ENCODE measurements at regions of chr10 and their contacts with region 1.

Region 1: DNA sequence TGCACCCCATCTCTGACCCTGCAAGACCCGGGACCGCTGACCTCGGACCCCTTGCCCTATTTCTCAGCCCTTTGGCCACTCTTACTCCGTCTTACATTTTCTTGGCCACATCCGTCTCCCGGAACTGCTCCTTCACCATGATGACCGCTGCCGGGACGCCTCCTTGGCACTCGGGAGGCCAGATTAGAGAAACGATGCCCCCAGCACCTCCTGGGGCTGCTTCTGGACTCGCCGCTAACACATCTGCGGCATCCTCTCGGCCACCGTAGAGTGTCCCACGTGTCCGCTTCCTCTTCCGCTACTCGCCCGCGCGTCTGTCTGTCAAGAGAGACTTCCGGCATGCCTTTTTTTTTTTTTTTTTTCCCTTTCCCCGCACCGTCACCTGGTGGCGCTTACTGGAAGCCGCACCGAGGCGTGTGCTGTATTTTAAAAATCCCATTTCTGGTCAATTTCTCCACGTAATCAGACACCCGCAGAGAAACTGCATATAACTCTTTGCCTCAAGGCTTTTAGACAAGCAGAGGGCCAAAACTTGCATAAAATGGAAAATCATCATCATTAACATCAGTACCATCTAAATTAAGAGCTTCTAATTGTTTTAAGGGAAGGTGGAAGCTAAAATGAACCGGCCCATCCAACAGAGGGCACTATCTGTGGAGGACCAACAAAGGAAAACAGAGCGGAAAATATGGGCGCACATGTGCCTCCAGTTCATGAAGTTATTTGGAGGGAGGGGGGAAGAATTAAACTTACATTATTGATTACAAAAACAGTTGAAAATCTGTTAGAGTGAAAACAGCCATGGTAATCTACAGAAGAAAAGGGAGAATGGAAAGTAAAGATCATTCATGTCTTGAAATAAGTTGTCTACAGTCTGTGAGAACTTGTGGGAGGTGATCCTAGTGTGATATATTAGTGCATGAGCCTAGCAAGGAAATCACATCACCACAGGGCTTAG is at the start of gene POLR3A:
- DNase-seq: peak; percentile 83 to 97 (median 90)
- ATAC-seq: peak; percentile 58
- H3K4me3 ChIP-seq: peak within 1 kb of the TSS; percentile 99
- H3K4me3 Mint-ChIP-seq: peak within 1 kb of the TSS; percentile 97
- H3K27ac ChIP-seq: peak within 1 kb of the TSS; percentile 38 to 61
- H3K27ac Mint-ChIP-seq: peak within 1 kb of the TSS; percentile 83
- H3K4me1 ChIP-seq: peaks cover 33% of the 10 kb centered on the region
- H3K4me1 Mint-ChIP-seq: peaks cover 48% of the 10 kb centered on the region
- H3K27me3 ChIP-seq: no peaks in the 10 kb centered on the region
- H3K27me3 Mint-ChIP-seq: no peaks in the 10 kb centered on the region
- CTCF ChIP-seq: peak; percentile 72
- total RNA-seq, gene POLR3A: 6.7 to 6.9 TPM

Region 2: DNA sequence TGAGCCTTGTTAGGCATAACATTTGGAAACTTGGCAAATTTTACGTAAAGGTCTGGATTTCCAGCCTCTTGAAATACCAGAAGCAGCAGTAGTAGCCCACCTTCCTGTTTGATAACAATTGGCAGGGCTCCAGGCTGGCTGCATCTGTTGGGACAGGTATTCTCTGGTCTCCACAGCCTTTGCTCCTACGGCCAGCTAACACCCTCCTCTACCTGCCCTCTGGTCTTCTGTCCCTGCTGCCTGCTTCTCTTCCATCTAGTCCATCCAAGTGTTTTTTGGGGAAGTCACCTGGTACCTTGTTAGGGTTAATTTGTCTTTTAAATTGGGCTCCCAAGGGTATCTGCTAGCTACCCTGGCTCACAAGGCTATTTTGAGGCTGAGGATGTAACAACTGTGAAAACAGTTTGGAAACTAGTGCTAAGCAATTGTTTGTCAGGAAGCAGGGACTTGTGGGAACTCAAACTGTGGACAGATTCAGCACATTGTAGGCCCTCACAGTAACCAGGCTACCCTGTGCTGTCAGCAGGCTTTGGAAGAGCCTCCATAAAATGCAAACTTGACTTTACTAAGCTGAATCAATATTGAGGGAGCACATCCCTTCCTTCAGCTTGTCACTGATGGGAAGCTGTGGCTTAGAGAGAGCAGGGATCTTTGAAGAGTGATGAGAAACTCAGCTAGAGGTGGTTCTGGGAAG is 12.7 kb after region 1 on chr10:
- CTCF ChIA-PET with region 1: interaction called, 4 read pairs
- POLR2A ChIA-PET with region 1: interaction called, 11 read pairs
- intact Hi-C with region 1: no loop called
- DNase-seq: no peak
- ATAC-seq: no peak
- H3K4me3 ChIP-seq: no peak overlapping the region
- H3K4me3 Mint-ChIP-seq: no peak overlapping the region
- H3K27ac ChIP-seq: no peak overlapping the region
- H3K27ac Mint-ChIP-seq: peak overlapping the region; percentile 76
- H3K4me1 ChIP-seq: peaks cover 34% of the 10 kb centered on the region
- H3K4me1 Mint-ChIP-seq: peaks cover 52% of the 10 kb centered on the region
- H3K27me3 ChIP-seq: no peaks in the 10 kb centered on the region
- H3K27me3 Mint-ChIP-seq: no peaks in the 10 kb centered on the region
- CTCF ChIP-seq: no peak

Region 3: DNA sequence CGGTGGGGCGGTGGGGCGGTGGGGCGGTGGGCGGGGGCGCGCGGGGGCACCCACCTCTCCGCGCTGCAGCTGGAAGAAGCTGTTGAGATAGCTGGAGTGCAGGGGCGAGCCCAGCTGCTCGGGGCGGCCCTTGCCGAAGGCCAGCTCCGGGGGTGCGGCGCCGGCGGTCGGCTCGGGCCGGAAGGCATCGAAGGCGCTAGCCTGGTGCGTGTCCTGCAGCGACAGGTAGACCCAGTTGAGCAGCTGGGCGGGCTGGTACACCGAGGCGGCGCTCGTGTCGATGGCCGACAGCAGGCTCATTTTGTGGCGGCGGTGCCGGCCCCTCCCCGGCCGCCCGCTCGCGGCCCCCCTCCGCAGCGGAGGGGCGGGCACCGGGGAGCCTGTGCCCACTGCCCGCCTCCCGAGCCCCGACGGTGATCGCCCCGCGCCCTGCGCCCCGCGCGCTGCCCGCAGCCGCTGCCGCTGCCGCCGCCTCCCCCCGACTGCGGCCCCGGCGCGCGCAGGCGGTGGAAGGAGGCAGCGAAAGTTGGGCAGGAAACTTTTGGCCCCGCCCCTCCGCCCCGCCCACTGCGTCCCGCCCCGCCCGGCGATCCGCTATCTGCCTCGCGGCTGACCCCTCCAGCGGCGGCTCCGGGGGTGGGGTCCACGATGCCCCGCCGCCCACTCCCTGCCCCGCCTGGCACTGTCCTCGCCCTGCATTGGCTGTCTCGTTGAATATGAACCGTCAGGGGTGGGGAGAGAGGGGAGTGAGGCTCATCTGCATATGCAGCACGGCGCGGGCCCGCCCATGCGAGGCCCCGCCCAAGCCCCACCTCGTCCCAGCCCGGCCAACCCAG is 1415.8 kb after region 1 on chr10 and contains the start of gene ZCCHC24:
- CTCF ChIA-PET with region 1: no interaction called
- POLR2A ChIA-PET with region 1: no interaction called
- intact Hi-C with region 1: loop called (anchors 5 to 10 kb)
- DNase-seq: peak; percentile 87 to 98 (median 93)
- ATAC-seq: peak; percentile 91
- H3K4me3 ChIP-seq: peak within 1 kb of the TSS; percentile 58
- H3K4me3 Mint-ChIP-seq: peak within 1 kb of the TSS; percentile 94
- H3K27ac ChIP-seq: no peak within 1 kb of the TSS
- H3K27ac Mint-ChIP-seq: peak within 1 kb of the TSS; percentile 83
- H3K4me1 ChIP-seq: peaks cover 33% of the 10 kb centered on the region
- H3K4me1 Mint-ChIP-seq: peaks cover 32% of the 10 kb centered on the region
- H3K27me3 ChIP-seq: no peaks in the 10 kb centered on the region
- H3K27me3 Mint-ChIP-seq: no peaks in the 10 kb centered on the region
- CTCF ChIP-seq: no peak
- total RNA-seq, gene ZCCHC24: 0.67 to 0.85 TPM

Measured in CD4-positive, alpha-beta T cell (primary cell).